ENCODE measurements at regions of chr20 and their contacts with region 1.

Region 1: GRCh38 chr20:32582659-32583580 is 2.2 kb downstream of the NOL4L start:
- DNase-seq: peak in 22 of 42 donors; percentile 26 to 74 (median 55)

Region 2: DNA sequence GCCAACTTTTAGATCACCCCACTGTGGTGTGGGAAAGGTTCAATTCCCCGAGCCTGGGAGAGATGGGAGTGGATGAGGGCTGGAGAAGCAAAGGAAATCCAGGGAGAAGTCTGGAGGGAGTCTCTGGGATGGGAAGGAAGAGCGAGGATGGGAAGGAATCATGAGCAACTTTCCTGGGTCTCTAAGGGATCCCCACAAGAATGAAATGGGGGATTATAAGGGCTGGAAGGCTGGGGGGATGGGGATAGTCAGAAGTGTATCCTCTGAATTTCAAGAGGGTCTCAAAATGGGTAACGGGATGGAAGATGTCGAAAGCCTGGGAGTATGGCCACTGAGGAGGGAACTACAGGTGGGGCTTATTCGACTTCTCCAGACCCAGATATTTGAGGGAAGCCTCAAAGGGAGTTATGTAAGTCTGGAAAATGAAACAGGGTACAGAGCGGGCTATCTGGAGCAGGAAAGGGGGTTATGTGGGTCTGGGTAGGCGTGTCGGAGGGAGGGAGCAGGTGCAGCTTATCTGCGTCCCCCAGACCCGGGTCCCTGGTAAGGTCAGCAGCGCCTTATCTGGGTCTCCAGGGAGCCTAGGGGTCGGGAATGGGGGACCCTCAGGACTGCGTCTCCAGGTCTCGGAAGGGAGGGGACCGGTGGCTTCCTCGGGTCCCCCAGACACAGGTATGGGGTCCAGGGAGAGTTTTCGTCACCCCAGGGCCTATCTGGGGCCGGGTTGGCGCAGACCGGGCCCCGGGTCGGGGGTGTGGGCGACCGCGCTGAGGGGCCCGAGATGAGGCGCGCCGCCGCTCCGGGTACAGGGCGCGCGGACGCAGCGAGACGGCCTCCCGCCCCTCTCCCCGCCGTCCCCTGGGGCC is 375.9 kb before region 1 on chr20:
- intact Hi-C with region 1: no loop called
- DNase-seq: peak in 3 of 42 donors; percentile 28 to 38 (median 35)

Region 3: DNA sequence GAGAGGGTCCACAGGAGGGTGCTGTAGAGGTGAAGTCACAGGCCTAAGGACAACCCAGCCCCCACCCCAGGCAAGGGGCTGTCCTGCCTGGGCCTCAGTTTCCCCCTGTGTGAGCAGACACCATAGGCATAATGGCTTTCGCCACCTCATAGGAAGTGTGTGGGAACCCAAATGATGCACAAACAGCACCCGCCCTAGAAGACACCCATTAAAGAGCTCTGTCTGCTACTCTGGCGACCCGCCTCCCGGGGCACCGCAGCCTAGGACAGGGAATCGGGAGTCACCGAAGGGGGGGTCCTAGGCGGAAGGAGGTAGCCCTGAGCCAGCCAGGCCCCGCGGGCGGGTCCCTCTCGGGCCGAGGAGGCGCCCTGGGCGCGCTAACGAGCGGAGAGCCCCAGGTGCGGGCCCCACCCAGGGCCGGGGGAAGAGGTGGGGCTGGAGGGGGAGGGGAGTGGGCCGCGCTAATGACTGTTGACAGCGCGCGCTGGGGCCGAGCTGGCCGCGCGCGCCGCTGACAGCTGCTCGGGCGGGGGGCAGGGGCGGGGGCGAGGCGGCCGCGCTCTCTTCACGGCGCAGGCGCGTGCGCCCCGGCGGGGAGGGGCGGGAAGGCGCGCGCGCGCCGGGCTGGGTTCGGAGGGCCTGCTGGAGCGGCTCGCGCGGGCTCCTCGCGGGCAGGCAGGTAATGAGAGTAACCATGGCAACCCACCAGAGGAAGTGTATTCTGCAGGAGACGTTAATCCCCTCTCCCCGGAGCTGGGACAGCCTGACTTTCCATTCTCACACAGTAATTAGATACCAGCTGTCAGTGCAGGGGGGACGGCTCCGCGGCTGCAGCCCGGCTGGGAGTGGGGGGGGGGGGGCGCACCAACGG is 46.7 kb before region 1 on chr20:
- intact Hi-C with region 1: loop called (anchors 5 kb)
- DNase-seq: peak in 37 of 42 donors; percentile 47 to 85 (median 71)